ENCODE measurements at regions of chr10 and their contacts with region 1.

Region 1: DNA sequence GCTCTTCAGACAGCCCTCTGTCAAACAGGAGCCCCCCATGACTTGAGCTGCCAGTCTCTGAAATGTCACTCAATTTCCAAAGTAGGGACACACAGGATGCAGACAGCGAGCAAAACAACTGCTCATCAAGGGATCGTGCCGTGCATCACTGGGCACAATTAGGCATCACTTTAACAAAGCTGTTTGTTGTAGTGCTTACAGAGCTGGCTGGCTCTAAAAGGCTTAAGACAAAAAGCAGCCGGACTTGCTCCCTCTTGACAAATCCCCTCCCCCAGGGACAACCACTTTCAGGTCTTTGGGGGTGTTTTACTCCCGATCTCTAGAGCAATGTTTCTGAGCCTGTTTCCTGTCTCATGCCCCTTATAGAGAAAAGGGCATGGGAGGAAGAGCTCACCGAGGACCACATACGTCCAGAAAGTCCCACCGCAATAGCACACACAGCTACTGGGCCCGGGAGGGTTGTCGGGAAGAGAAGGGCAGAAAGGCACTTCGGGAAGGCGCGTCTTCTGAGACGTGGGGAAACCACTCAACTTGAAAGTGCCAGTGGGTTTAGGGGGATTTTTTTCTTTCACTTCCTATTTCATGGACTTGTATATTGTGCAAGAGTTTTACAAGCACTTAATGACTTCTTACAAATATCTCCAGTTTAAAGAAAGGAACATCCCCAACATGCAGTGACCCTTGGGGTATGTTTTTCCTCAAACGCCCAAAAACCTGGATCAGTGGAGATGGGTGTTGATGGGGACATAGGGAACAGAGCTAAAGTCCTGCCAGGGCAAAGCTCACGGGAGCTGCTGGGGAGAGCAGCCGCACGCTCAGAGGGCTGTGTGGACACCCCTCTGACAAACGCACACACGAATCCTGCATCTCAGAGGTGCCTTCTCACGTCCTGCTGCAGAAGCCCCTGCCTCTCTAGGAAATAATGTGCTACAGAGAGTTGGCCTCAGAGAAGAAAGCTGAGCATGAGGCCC is 27.1 kb downstream of the LRRC20 start:
- DNase-seq: no peak
- ATAC-seq: peak; percentile 57

Region 2: GRCh38 chr10:69119896-69120295 is 1235.4 kb before region 1 on chr10:
- intact Hi-C with region 1: loop called (anchors 5 kb)
- DNase-seq: no peak
- ATAC-seq: no peak

Region 3: DNA sequence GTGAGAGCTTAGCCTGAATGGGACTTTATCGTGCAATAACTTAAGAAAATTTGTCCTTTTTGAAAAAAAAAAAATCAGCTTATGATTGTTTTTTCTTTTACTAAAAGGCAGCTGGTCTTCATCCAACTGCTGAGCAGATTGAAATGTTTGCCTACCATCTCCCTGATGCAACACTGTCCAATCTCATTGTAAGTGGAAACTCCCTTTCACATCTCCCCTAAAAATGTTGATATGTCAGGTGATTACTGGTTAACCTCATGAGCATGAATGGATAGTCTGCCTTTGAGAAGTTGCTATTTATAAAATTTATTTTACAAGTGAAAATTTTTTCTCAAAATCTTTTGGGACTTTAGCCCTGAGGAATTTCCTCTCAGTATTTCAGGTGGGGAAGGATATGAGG is 1153.0 kb before region 1 on chr10:
- intact Hi-C with region 1: no loop called
- DNase-seq: no peak
- ATAC-seq: no peak

Region 4: DNA sequence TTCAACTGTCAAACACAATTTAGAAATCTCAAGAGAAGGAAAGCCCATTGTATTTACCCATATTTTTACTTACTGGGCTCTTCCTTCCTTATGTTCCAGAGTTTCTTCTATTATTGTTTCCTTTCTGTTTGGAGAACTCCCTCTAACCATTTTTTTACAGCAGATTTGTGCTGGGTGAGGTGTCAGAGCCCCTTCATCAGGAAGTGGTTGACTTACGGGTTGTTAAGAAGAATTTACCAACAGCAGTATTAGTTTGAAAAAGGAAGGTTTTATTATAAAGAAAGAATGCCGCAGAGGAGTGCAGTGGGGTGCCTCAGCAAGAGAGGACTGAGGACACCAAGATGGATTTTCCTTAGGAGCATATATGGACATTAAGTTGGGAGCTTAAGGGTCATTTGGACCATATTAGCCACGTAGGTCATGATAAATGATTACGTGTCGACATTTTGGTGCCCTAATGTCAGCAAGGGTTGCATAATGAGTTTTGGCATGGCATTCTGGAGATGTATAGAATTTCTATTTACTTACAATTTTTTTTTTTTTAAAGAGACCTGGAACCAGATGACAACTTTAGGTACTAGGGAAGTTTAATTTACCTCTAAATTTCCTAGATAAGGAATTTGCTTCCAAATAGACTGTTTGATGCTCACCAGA is 436.2 kb after region 1 on chr10:
- intact Hi-C with region 1: no loop called
- DNase-seq: no peak
- ATAC-seq: no peak